Calu3 (cell line): ENCODE measurements at regions of chr7 and their contacts with region 1.

Region 1: GRCh38 chr7:26061688-26062150 is 90.3 kb upstream of the NFE2L3 start:
- DNase-seq: peak; percentile 91
- H3K4me3 Mint-ChIP-seq: no peak overlapping the region
- H3K27ac Mint-ChIP-seq: no peak overlapping the region
- H3K4me1 Mint-ChIP-seq: peaks cover 12% of the 10 kb centered on the region
- H3K27me3 Mint-ChIP-seq: peaks cover 43% of the 10 kb centered on the region
- CTCF ChIP-seq: peak; percentile 96

Region 2: DNA sequence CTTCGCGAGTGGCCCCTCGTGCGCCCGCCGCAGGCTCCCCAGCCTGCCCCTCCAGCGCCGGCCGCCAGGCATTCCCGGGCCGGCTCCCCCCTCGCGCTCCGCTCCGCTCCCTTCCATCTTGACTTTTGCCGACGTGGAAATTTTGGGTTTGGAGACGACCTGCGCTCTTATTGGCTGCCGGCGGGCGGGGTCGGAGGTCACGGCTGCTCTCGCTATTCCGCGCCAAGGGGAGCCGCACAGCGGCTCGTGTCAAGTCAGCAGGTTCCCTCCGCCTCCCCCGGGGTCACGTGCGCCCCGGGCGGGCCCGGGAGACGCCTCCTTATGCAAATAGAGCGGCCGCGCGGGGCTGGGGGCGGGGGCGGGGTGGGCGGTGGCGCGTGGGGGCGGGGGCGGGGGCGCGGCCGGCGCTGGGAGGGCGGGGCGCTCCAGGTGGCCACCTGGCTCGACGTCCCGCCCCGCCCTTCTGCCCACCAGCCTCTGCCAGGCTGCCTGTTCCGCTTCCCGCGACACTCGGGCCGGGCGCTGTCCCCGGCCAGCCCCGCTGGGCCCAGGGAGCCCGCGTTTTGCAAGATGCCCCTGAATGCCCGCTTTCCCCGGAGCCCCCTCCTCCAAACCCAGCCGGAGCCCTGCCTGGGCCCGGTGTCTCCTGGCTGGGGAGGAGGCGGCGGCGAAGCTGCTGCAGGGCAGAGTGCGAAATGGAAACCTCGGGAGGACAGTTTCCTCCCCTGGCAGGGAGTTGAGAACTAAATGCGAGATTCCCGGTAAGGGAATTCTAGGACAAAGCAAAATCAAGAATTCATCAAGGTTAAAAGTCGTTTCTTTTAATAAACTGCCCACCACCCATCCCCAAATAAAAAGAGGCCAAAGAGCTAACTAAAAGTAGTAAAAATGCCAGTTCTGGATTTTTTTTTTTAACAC is 110.4 kb before region 1 on chr7:
- CTCF ChIA-PET with region 1: no interaction called
- intact Hi-C with region 1: loop called (anchors 5 kb)
- DNase-seq: peak; percentile 96
- H3K4me3 Mint-ChIP-seq: peak overlapping the region; percentile 70
- H3K27ac Mint-ChIP-seq: peak overlapping the region; percentile 33
- H3K4me1 Mint-ChIP-seq: peaks cover 11% of the 10 kb centered on the region
- H3K27me3 Mint-ChIP-seq: no peaks in the 10 kb centered on the region
- CTCF ChIP-seq: no peak

Region 3: DNA sequence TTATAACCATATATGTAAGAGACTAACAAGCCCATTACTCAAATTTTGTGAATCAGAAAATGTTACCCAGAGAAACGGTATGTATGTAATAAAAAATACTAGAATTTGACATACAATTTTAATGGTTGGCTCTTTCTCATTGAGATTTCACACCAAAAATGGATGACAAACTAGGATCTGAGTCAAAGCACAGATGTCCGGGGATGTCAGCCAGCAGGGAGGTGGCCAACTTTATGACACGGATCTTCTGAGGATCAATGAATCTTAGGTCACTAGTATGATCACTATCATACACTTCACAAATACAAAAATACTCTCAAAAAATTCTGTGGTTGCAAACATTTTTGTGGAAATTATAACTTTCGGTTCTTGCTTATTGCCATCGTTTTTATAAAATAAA is 83.3 kb before region 1 on chr7:
- CTCF ChIA-PET with region 1: no interaction called
- intact Hi-C with region 1: loop called (anchors 5 kb)
- DNase-seq: no peak
- H3K4me3 Mint-ChIP-seq: no peak overlapping the region
- H3K27ac Mint-ChIP-seq: no peak overlapping the region
- H3K4me1 Mint-ChIP-seq: peaks cover 7% of the 10 kb centered on the region
- H3K27me3 Mint-ChIP-seq: peaks cover 22% of the 10 kb centered on the region
- CTCF ChIP-seq: no peak

Region 4: DNA sequence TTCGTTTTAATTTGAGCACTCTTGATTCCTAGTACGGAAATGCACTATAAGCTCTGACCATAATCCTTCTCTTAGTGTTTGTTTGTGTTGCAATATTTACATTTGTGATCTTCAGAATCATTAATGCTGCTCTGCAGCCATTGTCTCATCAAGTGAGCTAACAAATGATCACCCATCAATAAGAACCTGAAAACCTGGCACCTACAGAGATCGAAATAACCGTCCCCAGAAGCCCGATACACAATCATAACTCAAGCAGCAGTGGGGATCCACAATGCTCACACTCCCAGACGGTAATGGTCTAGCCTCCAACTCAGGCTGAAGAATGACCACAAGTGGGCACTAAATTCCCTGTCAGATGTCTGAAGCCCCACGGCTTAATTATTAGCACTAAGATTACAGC is 65.7 kb before region 1 on chr7:
- CTCF ChIA-PET with region 1: no interaction called
- intact Hi-C with region 1: loop called (anchors 2 kb)
- DNase-seq: peak; percentile 23
- H3K4me3 Mint-ChIP-seq: no peak overlapping the region
- H3K27ac Mint-ChIP-seq: no peak overlapping the region
- H3K4me1 Mint-ChIP-seq: no peaks in the 10 kb centered on the region
- H3K27me3 Mint-ChIP-seq: peaks cover 28% of the 10 kb centered on the region
- CTCF ChIP-seq: no peak